ENCODE measurements at regions of chr4 and their contacts with region 1.

Region 1: GRCh38 chr4:78775303-78776030 is 683 bp upstream of the BMP2K start:
- DNase-seq: peak; percentile 89
- H3K4me3 ChIP-seq: peak overlapping the region; percentile 76
- H3K27ac ChIP-seq: peak overlapping the region; percentile 82
- H3K4me1 ChIP-seq: peaks cover 42% of the 10 kb centered on the region
- CTCF ChIP-seq: no peak

Region 2: GRCh38 chr4:77819843-77820648 is 955.4 kb before region 1 on chr4:
- CTCF ChIA-PET with region 1: no interaction called
- POLR2A ChIA-PET with region 1: interaction called, 3 read pairs
- intact Hi-C with region 1: loop called (anchors 5 kb)
- DNase-seq: peak; percentile 95
- H3K4me3 ChIP-seq: peak overlapping the region; percentile 95
- H3K27ac ChIP-seq: peak overlapping the region; percentile 94
- H3K4me1 ChIP-seq: peaks cover 65% of the 10 kb centered on the region
- CTCF ChIP-seq: no peak; the same call in 1 of the 2 replicates

Region 3: DNA sequence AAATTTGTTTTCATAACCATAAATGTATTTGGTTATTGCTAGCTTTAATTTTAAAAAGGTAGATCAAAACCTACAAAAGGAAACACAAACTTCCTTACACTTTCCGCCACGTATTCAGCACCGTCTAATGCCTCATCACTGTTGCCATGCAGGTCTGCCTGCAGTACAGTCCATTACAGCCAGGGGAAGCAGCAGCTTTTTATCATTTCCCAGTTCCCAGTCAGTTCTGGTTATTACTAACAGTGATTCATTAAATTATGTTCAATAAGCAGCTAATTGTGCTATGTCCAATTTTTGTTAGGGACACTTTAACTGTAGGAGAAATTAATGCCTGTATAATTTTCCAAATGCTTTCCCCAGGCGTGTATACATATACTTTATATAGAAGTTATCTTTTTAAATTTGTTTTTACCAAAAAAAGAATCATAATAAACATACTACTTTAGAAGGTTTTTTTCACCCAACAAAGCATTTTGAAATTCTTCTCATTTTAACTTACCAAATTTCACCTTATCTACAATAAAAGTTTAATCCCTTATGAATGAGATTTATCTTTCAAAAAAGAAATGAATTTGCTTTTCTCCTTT is 130.6 kb before region 1 on chr4:
- CTCF ChIA-PET with region 1: no interaction called
- POLR2A ChIA-PET with region 1: interaction called, 3 read pairs
- intact Hi-C with region 1: loop called (anchors 1 kb)
- DNase-seq: peak; percentile 65
- H3K4me3 ChIP-seq: no peak overlapping the region
- H3K27ac ChIP-seq: no peak overlapping the region
- H3K4me1 ChIP-seq: no peaks in the 10 kb centered on the region
- CTCF ChIP-seq: peak; percentile 85

Region 4: GRCh38 chr4:78656968-78657445 is 118.5 kb before region 1 on chr4:
- CTCF ChIA-PET with region 1: no interaction called
- POLR2A ChIA-PET with region 1: interaction called, 5 read pairs
- intact Hi-C with region 1: loop called (anchors 5 kb)
- DNase-seq: peak; percentile 41
- H3K4me3 ChIP-seq: peak overlapping the region; percentile 28
- H3K27ac ChIP-seq: no peak overlapping the region
- H3K4me1 ChIP-seq: peaks cover 35% of the 10 kb centered on the region
- CTCF ChIP-seq: no peak

Region 5: DNA sequence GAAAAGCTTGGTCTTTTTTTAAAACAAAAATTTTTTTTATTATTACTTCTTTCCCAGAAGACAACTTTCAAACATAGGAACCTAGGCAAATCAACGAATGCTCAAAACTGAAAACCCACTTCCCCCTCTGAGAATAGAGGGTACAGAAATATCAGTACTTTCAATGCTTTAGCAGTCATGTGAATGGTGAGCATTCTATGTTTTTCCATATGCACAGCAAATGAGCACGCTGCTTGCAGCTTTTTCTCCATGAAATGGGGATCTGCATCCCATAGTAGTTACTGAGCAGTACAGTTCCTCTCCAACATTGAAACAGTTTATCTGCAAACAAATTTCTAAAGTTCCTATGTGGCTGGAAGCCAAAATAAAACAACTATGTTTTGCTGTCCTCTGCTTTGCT is 107.7 kb before region 1 on chr4:
- CTCF ChIA-PET with region 1: no interaction called
- POLR2A ChIA-PET with region 1: no interaction called
- intact Hi-C with region 1: no loop called
- DNase-seq: peak; percentile 50
- H3K4me3 ChIP-seq: no peak overlapping the region
- H3K27ac ChIP-seq: no peak overlapping the region
- H3K4me1 ChIP-seq: peaks cover 39% of the 10 kb centered on the region
- CTCF ChIP-seq: no peak

Region 6: GRCh38 chr4:78749972-78750727 is 25.3 kb before region 1 on chr4:
- CTCF ChIA-PET with region 1: no interaction called
- POLR2A ChIA-PET with region 1: interaction called, 73 read pairs
- intact Hi-C with region 1: loop called (anchors 1 kb)
- DNase-seq: peak; percentile 81
- H3K4me3 ChIP-seq: peak overlapping the region; percentile 52
- H3K27ac ChIP-seq: peak overlapping the region; percentile 88
- H3K4me1 ChIP-seq: peaks cover 61% of the 10 kb centered on the region
- CTCF ChIP-seq: no peak

Region 7: GRCh38 chr4:78864405-78865024 is 89.0 kb after region 1 on chr4:
- CTCF ChIA-PET with region 1: no interaction called
- POLR2A ChIA-PET with region 1: interaction called, 3 read pairs
- intact Hi-C with region 1: loop called (anchors 2 kb)
- DNase-seq: peak; percentile 86
- H3K4me3 ChIP-seq: no peak overlapping the region
- H3K27ac ChIP-seq: no peak overlapping the region
- H3K4me1 ChIP-seq: no peaks in the 10 kb centered on the region
- CTCF ChIP-seq: peak; percentile 96

Region 8: DNA sequence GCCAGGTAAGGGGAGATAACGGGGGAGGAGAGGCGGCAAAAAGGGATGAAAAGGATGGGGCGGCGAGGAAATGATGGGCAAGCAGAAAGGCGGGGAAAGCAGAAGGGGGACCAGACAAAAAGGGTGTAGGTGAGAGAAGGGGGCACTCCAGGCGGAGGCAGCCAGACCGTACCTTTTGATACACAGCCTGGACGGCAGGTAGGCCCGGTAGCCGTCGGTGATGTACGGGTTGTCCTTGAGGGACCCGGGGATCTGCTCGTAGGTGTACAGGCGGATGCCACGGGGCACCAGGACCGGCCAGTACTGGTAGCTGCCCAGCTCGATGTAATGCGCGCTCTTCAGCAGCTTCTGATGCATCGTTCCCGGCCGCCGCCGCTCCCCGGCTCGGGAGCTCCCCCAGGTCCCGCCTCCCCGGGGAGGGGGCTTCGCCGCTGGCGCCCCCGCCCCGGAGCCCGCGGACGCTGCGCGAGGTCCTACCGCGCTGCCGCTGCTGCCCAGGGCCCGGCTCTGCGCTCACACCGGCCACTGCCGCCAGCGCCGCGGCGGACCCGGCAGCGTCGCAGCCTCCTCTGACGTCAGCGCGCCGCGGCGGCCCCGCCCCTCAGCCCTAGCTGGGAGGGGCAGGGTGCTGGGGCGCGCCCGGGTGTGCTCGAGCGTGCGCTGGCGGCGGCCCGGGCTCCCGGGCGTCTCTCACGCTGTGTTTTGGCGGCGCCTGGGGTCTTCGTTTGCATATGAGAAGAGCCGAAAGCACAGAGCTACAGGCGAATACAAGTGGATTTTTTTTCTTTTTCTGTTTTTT is 163.6 kb after region 1 on chr4 and contains the start of gene PAQR3:
- CTCF ChIA-PET with region 1: no interaction called
- POLR2A ChIA-PET with region 1: no interaction called
- intact Hi-C with region 1: loop called (anchors 5 kb)
- DNase-seq: peak; percentile 92
- H3K4me3 ChIP-seq: peak within 1 kb of the TSS; percentile 100
- H3K27ac ChIP-seq: peak within 1 kb of the TSS; percentile 30
- H3K4me1 ChIP-seq: peaks cover 19% of the 10 kb centered on the region
- CTCF ChIP-seq: 0 out of 2 replicates have a peak, but pooled peaks have one; percentile 30
- total RNA-seq, gene PAQR3: 18.5 and 21.6 TPM in 2 replicates

Measured in OCI-LY7 (cell line).